B cell (primary cell): ENCODE measurements at regions of chr5 and their contacts with region 1.

Region 1: DNA sequence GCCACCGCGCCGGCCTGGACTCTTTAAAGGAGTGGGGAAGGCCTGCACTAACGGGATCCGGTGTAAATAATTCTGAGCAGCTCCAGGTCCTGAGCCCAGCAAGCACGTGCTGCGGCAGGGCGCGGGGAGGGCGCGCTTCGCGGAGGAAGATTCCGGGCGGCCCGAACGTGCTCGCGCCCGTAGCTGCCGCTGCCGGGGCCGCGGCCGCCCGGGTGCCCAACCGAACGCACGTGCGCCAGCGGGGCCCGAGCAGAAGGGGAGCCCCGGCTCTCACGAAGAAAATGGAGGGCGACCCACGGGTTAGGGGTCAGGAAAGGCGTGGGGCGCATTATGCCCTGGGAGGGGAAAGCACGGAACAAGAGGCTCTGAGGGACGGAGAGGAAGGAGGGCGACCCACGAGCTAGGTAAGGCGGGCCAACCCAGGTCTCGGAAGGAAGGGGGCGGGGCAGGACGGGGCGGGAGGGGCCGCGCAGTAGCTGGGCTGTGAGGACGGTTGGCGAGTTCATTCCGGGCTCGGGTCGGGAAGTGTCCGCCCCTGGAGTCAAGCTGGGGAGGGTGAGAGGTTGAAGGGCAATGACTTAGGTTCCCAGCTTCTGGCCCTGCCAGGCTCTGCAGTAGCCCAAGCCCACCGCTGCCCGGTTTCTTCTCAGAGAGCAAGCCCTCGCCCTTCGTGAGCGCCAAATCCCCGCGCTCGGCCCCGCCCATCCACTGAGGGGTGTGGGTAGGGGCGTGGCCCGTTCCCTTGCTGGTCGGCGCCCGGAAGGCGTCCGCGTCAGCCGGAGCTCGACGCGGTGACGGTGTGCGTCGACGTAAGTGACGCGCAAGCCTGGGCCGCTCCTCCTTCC is at the start of gene ZNF131:
- DNase-seq: peak; percentile 99
- ATAC-seq: peak; percentile 88
- H3K4me3 ChIP-seq: peak within 1 kb of the TSS; percentile 82 to 91 (median 85)
- H3K4me3 Mint-ChIP-seq: peak within 1 kb of the TSS; percentile 94
- H3K27ac ChIP-seq: peak within 1 kb of the TSS; percentile 87 to 97
- H3K27ac Mint-ChIP-seq: peak within 1 kb of the TSS; percentile 97
- H3K4me1 ChIP-seq: peaks cover 24 to 26% of the 10 kb centered on the region in 2 donors
- H3K4me1 Mint-ChIP-seq: peaks cover 29% of the 10 kb centered on the region
- H3K27me3 ChIP-seq: no peaks in the 10 kb centered on the region
- H3K27me3 Mint-ChIP-seq: no peaks in the 10 kb centered on the region
- CTCF ChIP-seq: no peak
- total RNA-seq, gene ZNF131: 64.0 and 72.5 TPM in 2 replicates

Region 2: DNA sequence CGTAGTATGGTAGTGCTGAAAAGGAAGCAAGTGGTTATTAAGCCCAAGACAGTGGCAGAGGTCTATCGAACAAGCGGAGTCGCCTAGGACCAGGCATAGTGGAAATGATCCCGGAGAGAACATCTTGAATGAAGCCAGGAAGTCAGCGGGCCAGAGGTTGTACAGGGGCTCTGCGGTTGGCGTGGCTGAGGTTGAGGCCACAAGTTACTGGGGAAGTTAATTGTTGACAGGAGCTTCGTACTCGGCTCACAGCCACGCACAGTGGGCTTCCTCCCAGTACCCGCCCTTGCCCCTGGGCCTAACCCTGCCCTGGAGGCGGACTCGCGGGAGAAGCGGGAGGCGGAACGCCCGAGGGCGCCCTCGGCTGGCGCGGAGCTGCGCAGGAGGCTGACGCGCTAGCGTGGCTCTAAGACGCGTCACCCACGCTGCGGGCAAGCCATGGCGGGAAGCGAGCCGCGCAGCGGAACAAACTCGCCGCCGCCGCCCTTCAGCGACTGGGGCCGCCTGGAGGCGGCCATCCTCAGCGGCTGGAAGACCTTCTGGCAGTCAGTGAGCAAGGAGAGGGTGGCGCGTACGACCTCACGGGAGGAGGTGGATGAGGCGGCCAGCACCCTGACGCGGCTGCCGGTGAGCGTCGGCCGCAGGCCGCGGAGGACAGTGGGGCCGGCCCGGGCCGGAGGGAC is 1195.9 kb before region 1 on chr5 and contains the start of gene FBXO4:
- CTCF ChIA-PET with region 1: no interaction called
- POLR2A ChIA-PET with region 1: no interaction called
- intact Hi-C with region 1: loop called (anchors 2 kb)
- DNase-seq: peak; percentile 95
- ATAC-seq: peak; percentile 93
- H3K4me3 ChIP-seq: peak within 1 kb of the TSS; percentile 72 to 87 (median 77)
- H3K4me3 Mint-ChIP-seq: peak within 1 kb of the TSS; percentile 86
- H3K27ac ChIP-seq: peak within 1 kb of the TSS; percentile 96 to 98
- H3K27ac Mint-ChIP-seq: peak within 1 kb of the TSS; percentile 95
- H3K4me1 ChIP-seq: peaks cover 13 to 17% of the 10 kb centered on the region in 2 donors
- H3K4me1 Mint-ChIP-seq: peaks cover 27% of the 10 kb centered on the region
- H3K27me3 ChIP-seq: no peaks in the 10 kb centered on the region
- H3K27me3 Mint-ChIP-seq: no peaks in the 10 kb centered on the region
- CTCF ChIP-seq: peak; percentile 67
- total RNA-seq, gene FBXO4: 17.1 and 17.9 TPM in 2 replicates

Region 3: DNA sequence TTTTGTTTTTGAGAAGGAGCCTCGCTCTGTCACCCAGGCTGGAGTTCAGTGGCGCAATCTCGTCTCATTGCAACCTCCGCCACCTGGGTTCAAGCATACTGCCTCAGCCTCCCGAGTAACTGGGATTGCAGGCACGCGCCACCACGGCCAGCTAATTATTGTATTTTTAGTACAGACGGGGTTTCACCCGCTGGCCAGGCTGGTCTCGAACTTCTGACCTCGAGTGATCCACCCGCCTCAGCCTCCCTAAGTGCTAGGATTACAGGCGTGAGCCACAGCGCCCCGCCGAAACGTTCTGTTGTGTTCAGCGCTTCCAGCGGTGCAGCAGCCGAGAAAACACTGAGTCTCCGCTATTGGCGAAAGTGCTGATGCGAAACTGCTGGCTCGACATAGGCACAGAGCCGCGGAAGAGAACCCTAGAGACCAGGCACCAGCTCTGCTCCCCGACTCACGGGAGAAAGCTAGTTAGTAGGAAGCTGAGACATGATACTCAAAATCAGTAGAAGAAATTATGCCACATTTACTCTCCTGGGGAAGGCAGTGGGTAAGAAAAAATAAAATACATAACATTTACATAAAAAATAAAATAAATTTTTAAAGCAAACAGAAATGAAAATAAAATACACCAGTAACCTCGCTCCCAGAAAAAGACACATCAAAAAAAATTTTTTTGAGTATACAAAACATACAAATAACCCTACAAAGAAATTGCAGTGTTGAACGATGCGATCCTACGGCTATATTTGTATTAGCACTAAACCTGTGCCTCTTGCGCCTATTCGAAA is 112.4 kb before region 1 on chr5:
- CTCF ChIA-PET with region 1: no interaction called
- POLR2A ChIA-PET with region 1: interaction called, 49 read pairs
- intact Hi-C with region 1: loop called (anchors 2 kb)
- DNase-seq: peak; percentile 95
- ATAC-seq: peak; percentile 58
- H3K4me3 ChIP-seq: peak overlapping the region; percentile 69 to 99 (median 76)
- H3K4me3 Mint-ChIP-seq: peak overlapping the region; percentile 89
- H3K27ac ChIP-seq: peak overlapping the region; percentile 83 to 97
- H3K27ac Mint-ChIP-seq: peak overlapping the region; percentile 98
- H3K4me1 ChIP-seq: peaks cover 20 to 38% of the 10 kb centered on the region in 2 donors
- H3K4me1 Mint-ChIP-seq: peaks cover 31% of the 10 kb centered on the region
- H3K27me3 ChIP-seq: no peaks in the 10 kb centered on the region
- H3K27me3 Mint-ChIP-seq: no peaks in the 10 kb centered on the region
- CTCF ChIP-seq: peak; percentile 36

Region 4: GRCh38 chr5:43105369-43106289 is 15.3 kb before region 1 on chr5:
- CTCF ChIA-PET with region 1: interaction called, 96 read pairs
- POLR2A ChIA-PET with region 1: interaction called, 6 read pairs
- intact Hi-C with region 1: loop called (anchors 1 kb)
- DNase-seq: peak; percentile 94
- ATAC-seq: peak; percentile 97
- H3K4me3 ChIP-seq: peak overlapping the region; percentile 58 to 85 (median 66)
- H3K4me3 Mint-ChIP-seq: peak overlapping the region; percentile 90
- H3K27ac ChIP-seq: peak overlapping the region; percentile 49 to 71
- H3K27ac Mint-ChIP-seq: peak overlapping the region; percentile 83
- H3K4me1 ChIP-seq: peaks cover 0 to 12% of the 10 kb centered on the region in 2 donors
- H3K4me1 Mint-ChIP-seq: peaks cover 11% of the 10 kb centered on the region
- H3K27me3 ChIP-seq: no peaks in the 10 kb centered on the region
- H3K27me3 Mint-ChIP-seq: no peaks in the 10 kb centered on the region
- CTCF ChIP-seq: peak; percentile 100

Region 5: DNA sequence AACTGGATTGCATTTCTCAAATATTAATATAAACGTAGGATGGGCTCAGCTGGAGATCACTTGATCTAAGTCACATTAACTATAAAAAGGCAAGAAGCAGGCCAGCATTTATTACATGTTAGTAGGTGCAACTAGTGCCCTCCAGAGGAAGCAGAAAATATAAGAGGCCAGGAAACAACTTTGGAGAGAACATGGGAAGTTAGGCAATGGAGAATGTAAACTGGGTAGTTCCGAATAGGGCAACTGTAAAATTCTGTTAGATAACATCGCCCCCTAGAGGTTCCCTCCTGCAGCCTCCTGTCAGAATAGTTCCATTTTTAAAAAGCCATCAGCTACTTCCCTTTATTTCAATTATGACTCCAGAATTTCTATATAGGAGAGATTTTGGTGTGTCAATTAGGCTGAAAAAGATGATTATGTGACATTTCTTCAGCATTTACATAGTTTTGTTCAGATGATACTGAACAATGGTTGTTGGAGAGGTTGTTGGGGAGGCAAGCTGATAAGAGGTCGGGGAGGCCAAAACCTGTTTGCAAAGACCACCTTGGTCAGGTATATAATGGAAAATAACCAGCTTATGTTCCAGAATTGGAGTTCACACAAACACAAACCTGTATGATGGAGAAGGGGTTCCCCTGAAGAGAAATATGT is 268.9 kb after region 1 on chr5:
- CTCF ChIA-PET with region 1: interaction called, 11 read pairs
- POLR2A ChIA-PET with region 1: no interaction called
- intact Hi-C with region 1: loop called (anchors 5 kb)
- DNase-seq: peak; percentile 73
- ATAC-seq: peak; percentile 61
- H3K4me3 ChIP-seq: no peak overlapping the region
- H3K4me3 Mint-ChIP-seq: no peak overlapping the region
- H3K27ac ChIP-seq: no peak overlapping the region
- H3K27ac Mint-ChIP-seq: no peak overlapping the region
- H3K4me1 ChIP-seq: no peaks in the 10 kb centered on the region
- H3K4me1 Mint-ChIP-seq: peaks cover 17% of the 10 kb centered on the region
- H3K27me3 ChIP-seq: no peaks in the 10 kb centered on the region
- H3K27me3 Mint-ChIP-seq: no peaks in the 10 kb centered on the region
- CTCF ChIP-seq: peak; percentile 91

Region 6: DNA sequence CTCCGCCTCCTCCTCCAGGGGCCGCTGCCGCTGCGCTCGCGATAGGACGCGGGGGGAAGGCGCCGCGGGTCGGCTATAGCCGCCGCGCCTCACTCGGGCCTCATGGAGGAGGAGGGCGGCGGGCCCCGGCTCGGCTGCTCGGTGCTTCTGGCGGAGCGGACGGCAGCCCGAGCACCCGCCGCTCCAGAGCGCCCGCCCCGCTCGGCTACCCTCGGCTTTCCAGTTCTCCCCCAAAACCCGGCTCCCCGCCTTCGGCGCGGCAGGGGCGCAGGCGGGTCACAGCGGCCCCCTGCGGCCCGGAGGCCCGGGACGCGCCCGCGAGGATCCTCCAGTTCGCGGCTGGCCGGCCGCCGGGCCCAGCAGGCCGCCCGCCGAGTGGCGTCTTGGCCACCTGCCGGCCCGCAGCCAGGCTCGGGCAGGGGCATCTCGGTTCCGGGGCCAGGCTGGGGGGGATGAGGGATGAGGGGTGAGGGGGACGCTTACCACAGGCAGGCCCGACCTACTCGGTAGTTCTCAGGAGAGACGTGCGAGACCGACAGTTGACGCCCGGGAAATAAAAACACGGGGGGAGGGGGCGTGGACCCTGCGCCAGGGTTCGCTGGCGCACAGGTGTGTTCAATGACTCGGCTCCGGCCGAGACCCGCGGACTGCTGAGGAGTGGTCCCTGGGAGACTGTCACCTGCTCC is 436.1 kb after region 1 on chr5 and contains the start of gene PAIP1:
- CTCF ChIA-PET with region 1: no interaction called
- POLR2A ChIA-PET with region 1: no interaction called
- intact Hi-C with region 1: loop called (anchors 2 kb)
- DNase-seq: peak; percentile 95
- ATAC-seq: peak; percentile 73
- H3K4me3 ChIP-seq: peak within 1 kb of the TSS; percentile 66 to 83 (median 79)
- H3K4me3 Mint-ChIP-seq: peak within 1 kb of the TSS; percentile 93
- H3K27ac ChIP-seq: peak within 1 kb of the TSS; percentile 81 to 91
- H3K27ac Mint-ChIP-seq: peak within 1 kb of the TSS; percentile 92
- H3K4me1 ChIP-seq: peaks cover 14 to 31% of the 10 kb centered on the region in 2 donors
- H3K4me1 Mint-ChIP-seq: peaks cover 16% of the 10 kb centered on the region
- H3K27me3 ChIP-seq: no peaks in the 10 kb centered on the region
- H3K27me3 Mint-ChIP-seq: no peaks in the 10 kb centered on the region
- CTCF ChIP-seq: peak; percentile 87
- total RNA-seq, gene PAIP1: 31.8 and 35.9 TPM in 2 replicates